Uterus (tissue), 4 donors: ENCODE measurements at regions of chr19 and their contacts with region 1.

Region 1: DNA sequence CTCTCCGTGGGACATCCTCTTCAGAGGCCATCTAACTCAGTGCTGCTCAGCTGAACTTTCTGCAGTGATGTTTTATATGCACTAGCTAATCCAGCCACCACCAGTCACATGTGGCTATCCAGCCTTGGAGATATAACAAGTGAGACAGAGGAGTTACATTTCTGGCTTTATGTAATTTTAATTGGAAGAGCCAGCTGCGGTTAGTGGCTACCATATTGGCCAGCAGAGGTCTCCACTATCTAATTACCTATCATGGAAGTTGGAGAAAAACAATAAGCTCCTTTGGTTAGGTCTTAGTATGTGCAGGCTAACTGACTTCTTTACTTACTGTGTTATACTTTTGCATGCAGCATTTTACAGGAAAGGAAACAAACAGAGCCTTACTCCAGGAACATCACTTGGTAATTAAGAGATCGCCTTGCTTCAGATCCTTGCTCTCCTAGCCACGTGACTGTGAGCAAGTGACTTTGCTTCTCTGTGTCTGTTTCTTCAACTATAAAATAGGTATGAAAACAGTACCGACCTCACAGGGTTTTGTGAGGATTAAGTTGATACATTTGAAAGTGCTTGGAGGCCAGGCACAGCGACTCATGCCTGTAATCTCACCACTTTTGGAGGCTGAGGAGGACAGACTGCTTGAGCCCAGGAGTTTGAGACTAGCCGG is 1.6 kb upstream of the KLK10 start:
- DNase-seq: no peak
- H3K4me3 ChIP-seq: no peak overlapping the region
- H3K27ac ChIP-seq: no peak overlapping the region
- H3K4me1 ChIP-seq: peaks cover 0 to 12% of the 10 kb centered on the region in 2 donors
- H3K27me3 ChIP-seq: peaks cover 0 to 25% of the 10 kb centered on the region in 2 donors
- CTCF ChIP-seq: peak; percentile 39 to 73 (median 58)
- POLR2A ChIP-seq: no peak

Region 2: DNA sequence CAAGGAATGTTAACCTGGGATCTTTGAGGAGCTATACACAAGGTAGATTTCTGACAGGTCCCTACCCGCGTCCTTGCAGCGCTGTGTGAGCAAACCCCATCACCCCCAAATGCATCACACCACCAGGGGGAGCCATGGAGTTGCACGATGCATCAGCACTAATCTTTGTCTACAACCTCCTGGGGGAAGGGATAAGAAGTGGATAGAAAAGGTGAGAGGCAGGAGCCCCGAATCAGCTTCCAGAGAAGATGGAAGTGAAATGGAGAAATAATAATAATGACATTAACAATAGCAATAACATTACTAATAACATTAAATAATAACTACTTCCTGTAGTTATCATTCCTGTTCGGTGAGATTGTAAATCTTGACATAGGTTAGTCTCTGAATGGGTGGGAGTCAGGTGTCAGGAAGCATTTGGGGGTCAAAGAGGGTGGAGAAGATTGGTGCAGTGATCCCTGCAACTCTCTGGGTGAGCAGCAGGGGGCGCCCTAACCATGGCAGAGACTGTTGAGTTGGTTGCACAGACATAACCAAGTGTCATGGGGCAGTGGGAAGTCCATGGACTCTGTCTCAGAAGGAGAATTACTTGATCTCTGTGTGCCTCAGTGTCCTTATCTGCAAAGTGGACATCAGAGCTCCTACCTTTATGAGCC is 137.5 kb after region 1 on chr19:
- intact Hi-C with region 1: loop called (anchors 10 kb)
- DNase-seq: no peak
- H3K4me3 ChIP-seq: no peak overlapping the region
- H3K27ac ChIP-seq: no peak overlapping the region
- H3K4me1 ChIP-seq: no peaks in the 10 kb centered on the region
- H3K27me3 ChIP-seq: no peaks in the 10 kb centered on the region
- CTCF ChIP-seq: peak in 3 of 4 experiments; percentile 3 to 26 (median 10)
- POLR2A ChIP-seq: no peak